HEK293T (cell line): ENCODE measurements at regions of chr6 and their contacts with region 1.

Region 1: DNA sequence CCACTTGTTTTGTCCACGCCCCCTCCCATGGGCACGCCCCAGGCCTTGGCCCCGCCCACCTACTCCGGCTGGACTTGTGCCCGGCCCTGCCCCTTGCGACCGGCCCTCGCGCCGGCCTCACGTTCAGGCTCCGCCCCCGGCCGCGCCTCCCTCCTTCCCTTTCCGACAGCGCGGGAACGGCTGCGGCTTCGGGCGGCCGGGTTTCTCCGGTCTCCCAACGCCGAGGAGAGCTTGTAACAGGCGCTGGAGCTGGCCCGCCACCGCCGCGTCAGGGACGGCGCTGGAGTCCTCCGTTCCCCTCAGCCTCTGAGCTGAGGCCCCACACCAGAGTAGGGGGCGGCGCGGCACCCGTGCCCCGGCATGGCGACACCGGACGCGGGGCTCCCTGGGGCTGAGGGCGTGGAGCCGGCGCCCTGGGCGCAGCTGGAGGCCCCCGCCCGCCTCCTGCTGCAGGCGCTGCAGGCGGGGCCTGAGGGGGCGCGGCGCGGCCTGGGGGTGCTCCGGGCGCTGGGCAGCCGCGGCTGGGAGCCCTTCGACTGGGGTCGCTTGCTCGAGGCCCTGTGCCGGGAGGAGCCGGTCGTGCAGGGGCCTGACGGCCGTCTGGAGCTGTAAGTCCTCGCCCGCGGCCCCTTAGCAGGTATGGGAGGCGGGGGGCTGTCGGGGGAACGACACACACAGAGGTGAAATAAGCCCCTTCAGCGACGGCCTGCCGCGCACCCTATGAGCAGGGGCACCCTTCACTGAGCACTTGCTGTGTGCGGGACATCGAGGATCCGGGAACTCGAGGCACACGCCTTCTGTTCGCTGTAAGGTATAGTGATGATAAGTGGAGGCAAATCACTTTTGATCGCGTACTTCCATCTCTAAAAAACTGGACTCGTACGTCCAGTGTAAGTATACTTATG is at the start of gene FANCE:
- DNase-seq: peak; percentile 95

Region 2: DNA sequence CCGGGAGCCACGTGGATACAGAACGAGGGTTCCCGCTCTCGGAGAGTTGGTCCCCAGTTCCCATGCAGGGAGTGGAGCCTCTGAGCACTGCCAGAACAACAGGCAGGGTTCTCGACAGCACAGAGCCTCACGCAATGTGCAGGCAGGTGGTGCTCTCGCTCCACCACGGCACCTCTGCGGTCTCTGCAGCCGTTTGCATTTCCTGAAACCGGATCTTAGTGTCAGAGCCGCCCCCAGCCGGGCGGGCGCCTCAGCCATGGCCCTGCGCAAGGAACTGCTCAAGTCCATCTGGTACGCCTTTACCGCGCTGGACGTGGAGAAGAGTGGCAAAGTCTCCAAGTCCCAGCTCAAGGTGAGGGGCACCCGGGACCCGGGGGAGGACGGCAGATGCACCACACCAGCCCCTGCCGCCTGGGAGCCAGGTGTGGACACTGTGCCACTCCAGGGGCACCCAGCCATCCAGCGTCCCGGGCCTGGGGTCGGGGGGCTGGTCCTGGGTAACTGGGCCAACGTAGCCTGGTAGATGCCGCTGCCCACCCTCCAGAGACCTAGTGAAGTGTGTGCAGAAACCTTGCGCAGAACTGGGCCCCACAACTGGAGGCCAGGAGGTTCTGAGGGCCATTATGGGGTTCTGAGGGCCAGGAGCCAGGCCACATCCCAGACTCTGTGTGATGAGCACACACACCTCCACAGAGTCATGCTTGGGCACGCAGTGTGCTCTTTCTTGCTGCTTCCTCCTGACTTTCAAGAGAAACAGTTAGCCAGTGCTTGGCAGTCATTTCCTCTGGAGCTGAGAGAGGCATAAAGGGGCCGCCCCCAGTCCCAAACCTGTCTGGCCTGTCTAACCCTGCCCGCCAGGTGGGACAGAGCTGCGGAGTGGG is 154.6 kb before region 1 on chr6 and contains the start of gene DEF6:
- CTCF ChIA-PET with region 1: interaction called, 11 read pairs
- POLR2A ChIA-PET with region 1: interaction called, 3 read pairs
- DNase-seq: peak; percentile 89

Region 3: DNA sequence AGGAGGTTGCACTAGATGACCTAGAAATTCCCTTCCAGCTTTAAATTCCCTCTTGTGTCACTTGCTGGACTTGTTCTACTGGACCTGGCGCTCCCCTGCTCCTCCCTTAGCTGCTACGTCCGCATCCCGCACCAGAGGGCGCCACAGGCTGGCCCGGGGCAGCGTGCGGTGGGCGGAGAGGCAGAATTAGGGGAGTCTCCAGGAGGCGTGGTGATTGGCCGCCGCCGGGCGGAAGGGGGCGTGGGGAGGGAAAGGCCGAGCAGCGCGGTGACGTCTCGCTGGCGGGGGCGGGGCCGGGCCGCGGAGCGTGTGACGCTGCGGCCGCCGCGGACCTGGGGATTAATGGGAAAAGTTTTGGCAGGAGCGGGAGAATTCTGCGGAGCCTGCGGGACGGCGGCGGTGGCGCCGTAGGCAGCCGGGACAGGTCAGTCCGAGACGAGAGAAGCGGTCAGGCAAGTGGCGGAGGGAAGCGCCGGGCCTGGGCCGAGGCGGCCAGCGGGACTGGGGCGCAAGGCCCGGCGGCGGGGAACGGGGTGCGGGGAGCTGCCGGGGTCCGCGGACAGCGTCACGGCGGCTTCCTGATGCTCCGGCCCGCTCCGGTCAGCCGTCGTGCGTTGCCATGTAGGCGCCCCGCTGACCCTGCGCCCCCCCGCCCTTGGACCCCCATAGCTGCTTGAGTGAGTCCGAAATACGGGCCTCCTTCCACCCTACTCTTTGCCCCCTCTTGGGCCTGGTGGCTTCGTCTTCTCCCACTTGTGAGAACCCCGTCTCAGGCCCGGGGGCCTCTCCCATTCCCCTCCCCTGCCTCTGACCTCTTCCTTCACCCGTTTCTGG is 110.0 kb before region 1 on chr6 and contains the start of gene PPARD:
- CTCF ChIA-PET with region 1: interaction called, 42 read pairs
- POLR2A ChIA-PET with region 1: interaction called, 3 read pairs
- DNase-seq: peak; percentile 99

Region 4: DNA sequence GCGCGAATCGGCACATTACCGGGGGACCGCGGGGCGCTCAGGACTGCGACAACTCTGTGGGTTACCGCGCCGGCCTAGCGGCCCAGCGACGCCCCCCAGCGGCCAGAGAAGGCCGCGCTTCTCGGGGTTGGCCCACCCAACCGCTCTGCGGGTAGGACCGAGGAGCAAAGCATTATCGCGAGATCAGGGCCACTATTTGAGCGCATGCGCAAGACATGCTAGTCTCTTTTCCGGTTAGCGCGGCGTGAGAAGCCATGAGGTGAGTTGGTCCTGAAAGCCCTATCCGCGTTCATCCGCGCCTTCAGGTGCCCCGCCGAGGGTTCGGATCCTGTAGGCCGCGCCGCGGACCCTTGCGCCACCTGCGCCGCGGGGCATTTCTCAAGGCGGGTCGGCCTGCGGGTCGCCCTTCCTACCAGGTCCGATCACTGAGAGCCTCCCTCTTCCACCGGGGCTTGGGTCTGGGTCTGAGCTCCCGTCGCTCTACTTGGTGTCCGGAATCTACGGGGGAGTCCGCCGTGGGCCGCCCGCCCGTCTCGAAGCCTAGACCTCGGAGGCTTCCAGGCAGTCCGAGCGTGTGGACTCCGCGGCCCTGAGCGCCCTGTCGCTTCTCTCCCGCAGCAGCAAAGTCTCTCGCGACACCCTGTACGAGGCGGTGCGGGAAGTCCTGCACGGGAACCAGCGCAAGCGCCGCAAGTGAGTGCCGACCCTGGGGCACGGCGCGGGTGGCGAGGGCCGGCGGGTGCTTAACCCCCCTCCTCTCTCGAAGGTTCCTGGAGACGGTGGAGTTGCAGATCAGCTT is 15.9 kb after region 1 on chr6 and contains the start of gene RPL10A:
- CTCF ChIA-PET with region 1: interaction called, 16 read pairs
- POLR2A ChIA-PET with region 1: interaction called, 22 read pairs
- DNase-seq: peak; percentile 97